CD14-positive monocyte (primary cell): ENCODE measurements at regions of chr12 and their contacts with region 1.

Region 1: GRCh38 chr12:30806989-30807694 is 52.4 kb upstream of the CAPRIN2 start:
- DNase-seq: peak; percentile 36 to 45 (median 42)
- H3K4me3 ChIP-seq: no peak overlapping the region
- H3K4me3 Mint-ChIP-seq: no peak overlapping the region
- H3K27ac ChIP-seq: no peak overlapping the region
- H3K27ac Mint-ChIP-seq: no peak overlapping the region
- H3K4me1 ChIP-seq: no peaks in the 10 kb centered on the region
- H3K4me1 Mint-ChIP-seq: no peaks in the 10 kb centered on the region
- H3K27me3 ChIP-seq: no peaks in the 10 kb centered on the region
- H3K27me3 Mint-ChIP-seq: peaks cover 2 to 6% (median 3%) of the 10 kb centered on the region in 3 donors
- CTCF ChIP-seq: peak; percentile 80

Region 2: GRCh38 chr12:29519585-29520182 is 1287.5 kb before region 1 on chr12:
- intact Hi-C with region 1: loop called in 1 of 2 experiments (anchors 10 kb)
- DNase-seq: peak in 1 of 3 donors; percentile 3
- H3K4me3 ChIP-seq: no peak overlapping the region
- H3K4me3 Mint-ChIP-seq: no peak overlapping the region
- H3K27ac ChIP-seq: no peak overlapping the region
- H3K27ac Mint-ChIP-seq: no peak overlapping the region
- H3K4me1 ChIP-seq: no peaks in the 10 kb centered on the region
- H3K4me1 Mint-ChIP-seq: no peaks in the 10 kb centered on the region
- H3K27me3 ChIP-seq: no peaks in the 10 kb centered on the region
- H3K27me3 Mint-ChIP-seq: peaks cover 2 to 6% (median 3%) of the 10 kb centered on the region in 3 donors
- CTCF ChIP-seq: peak; percentile 65

Region 3: GRCh38 chr12:29552324-29552927 is 1254.7 kb before region 1 on chr12:
- intact Hi-C with region 1: loop called (anchors 2 to 5 kb)
- DNase-seq: peak; percentile 23 to 47 (median 38)
- H3K4me3 ChIP-seq: no peak overlapping the region
- H3K4me3 Mint-ChIP-seq: no peak overlapping the region
- H3K27ac ChIP-seq: no peak overlapping the region
- H3K27ac Mint-ChIP-seq: no peak overlapping the region
- H3K4me1 ChIP-seq: no peaks in the 10 kb centered on the region
- H3K4me1 Mint-ChIP-seq: no peaks in the 10 kb centered on the region
- H3K27me3 ChIP-seq: no peaks in the 10 kb centered on the region
- H3K27me3 Mint-ChIP-seq: peaks cover 0 to 2% (median 0%) of the 10 kb centered on the region in 3 donors
- CTCF ChIP-seq: peak; percentile 94